ENCODE measurements at regions of chr11 and their contacts with region 1.

Region 1: DNA sequence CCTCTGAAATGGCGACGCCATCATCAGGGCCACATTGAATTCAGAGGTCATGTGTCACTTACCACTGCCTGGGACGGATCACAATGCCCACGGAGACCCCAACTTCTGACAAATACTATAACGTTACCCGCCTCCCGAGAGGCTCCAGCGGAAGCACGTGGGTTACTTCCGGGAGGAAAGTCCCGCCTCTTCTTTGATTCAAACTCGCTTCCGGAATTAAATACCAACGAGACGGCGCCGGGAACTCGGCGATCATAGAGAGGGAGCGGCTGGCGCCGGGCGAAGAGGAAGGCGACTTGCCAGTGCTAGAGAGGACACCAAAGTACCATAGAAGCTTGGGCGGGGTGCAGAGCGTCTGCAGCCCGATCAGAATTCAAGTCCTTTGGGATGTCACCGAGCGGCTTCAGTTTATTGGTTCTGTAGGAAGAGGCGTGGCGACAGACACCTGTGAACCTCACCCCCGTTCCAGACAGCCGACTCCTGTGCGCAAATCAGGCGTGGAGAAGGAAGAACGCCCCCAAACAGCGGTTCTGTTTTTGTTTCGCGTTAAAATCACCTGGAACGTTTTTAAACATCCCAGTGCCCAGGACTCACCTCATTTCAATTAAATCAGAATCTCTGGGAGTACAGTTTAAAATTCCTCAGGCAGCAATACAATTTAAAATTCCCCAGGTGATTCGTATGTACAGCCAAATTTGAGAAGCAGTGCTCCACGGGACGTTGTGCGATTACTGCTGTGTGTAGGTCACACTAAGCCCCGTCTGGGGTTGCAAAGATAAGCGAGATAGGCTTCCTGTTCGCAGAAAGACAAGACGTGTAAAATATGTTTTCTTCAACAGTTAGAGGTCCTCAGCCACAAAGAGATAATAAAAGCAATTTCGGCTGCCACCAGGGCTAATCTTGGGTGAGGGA is at the start of gene TIMM10:
- DNase-seq: peak; percentile 74 to 97
- ATAC-seq: peak; percentile 81 to 93 (median 87)
- H3K4me3 ChIP-seq: peak within 1 kb of the TSS; percentile 65
- H3K4me3 Mint-ChIP-seq: peak within 1 kb of the TSS; percentile 99
- H3K27ac ChIP-seq: peak within 1 kb of the TSS; percentile 78
- H3K27ac Mint-ChIP-seq: peak within 1 kb of the TSS; percentile 97 to 99
- H3K4me1 ChIP-seq: peaks cover 15% of the 10 kb centered on the region
- H3K4me1 Mint-ChIP-seq: peaks cover 30 to 36% of the 10 kb centered on the region in 2 donors
- H3K27me3 ChIP-seq: no peaks in the 10 kb centered on the region
- H3K27me3 Mint-ChIP-seq: no peaks in the 10 kb centered on the region
- CTCF ChIP-seq: no peak
- total RNA-seq, gene TIMM10: 15.0 to 18.8 (median 17.1) TPM

Region 2: GRCh38 chr11:57456960-57457642 is 73.8 kb before region 1 on chr11:
- intact Hi-C with region 1: loop called (anchors 1 kb)
- DNase-seq: peak; percentile 73 to 85
- ATAC-seq: peak; percentile 77 to 80 (median 78)
- H3K4me3 ChIP-seq: no peak overlapping the region
- H3K4me3 Mint-ChIP-seq: peak overlapping the region; percentile 73
- H3K27ac ChIP-seq: no peak overlapping the region
- H3K27ac Mint-ChIP-seq: no peak overlapping the region
- H3K4me1 ChIP-seq: peaks cover 41% of the 10 kb centered on the region
- H3K4me1 Mint-ChIP-seq: peaks cover 24 to 39% of the 10 kb centered on the region in 2 donors
- H3K27me3 ChIP-seq: peaks cover 33% of the 10 kb centered on the region
- H3K27me3 Mint-ChIP-seq: peaks cover 23 to 28% of the 10 kb centered on the region in 2 donors
- CTCF ChIP-seq: peak; percentile 95

Region 3: DNA sequence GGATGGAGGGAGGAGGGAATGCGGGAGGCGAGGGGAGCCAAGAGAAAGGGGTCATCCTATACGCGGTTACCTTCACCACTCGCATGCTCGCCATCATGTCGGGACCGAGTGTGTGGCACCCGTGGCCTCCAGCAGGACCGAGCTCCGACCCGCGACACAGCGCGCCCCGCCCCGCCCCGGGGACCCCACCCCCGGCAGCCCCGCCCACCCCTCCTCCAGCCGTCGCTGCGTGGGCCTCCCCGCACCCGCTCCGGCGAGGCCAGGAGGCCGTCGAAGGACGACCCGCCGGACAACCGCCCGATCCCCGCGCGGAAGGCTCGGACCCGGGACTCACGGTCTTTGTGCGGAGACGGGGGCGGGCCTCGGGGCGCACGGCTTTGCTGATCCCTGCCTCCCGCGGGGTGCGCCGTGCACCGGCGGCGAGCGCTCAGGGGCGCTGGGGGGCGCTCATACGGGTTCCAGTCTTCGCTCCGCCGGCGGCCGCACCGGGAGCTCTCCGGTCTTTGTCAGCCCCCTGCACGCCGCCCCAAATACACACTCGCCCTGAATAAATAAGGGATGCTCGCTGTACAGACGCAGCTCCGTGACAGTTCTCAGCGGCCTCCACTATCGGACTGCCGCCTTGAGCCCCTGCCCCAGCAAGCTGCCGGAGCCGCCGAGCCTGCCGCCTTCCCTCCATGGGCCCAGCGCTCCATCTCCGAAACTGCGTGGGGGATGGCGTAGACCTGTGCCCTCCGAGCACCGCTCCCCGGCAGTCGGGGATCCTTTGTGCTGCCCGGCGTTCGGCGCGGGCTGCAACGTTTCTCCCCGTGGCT is 36.9 kb after region 1 on chr11 and contains the start of gene UBE2L6:
- intact Hi-C with region 1: loop called (anchors 1 kb)
- DNase-seq: peak; percentile 56 to 95
- ATAC-seq: peak; percentile 76 to 91 (median 78)
- H3K4me3 ChIP-seq: peak within 1 kb of the TSS; percentile 99
- H3K4me3 Mint-ChIP-seq: peak within 1 kb of the TSS; percentile 99
- H3K27ac ChIP-seq: peak within 1 kb of the TSS; percentile 95
- H3K27ac Mint-ChIP-seq: peak within 1 kb of the TSS; percentile 96 to 99
- H3K4me1 ChIP-seq: peaks cover 24% of the 10 kb centered on the region
- H3K4me1 Mint-ChIP-seq: peaks cover 40 to 50% of the 10 kb centered on the region in 2 donors
- H3K27me3 ChIP-seq: no peaks in the 10 kb centered on the region
- H3K27me3 Mint-ChIP-seq: no peaks in the 10 kb centered on the region
- CTCF ChIP-seq: peak; percentile 93
- total RNA-seq, gene UBE2L6: 89.1 to 108 (median 103) TPM

Region 4: GRCh38 chr11:57667736-57668435 is 137.0 kb after region 1 on chr11 and contains the start of gene ZDHHC5:
- intact Hi-C with region 1: loop called (anchors 2 kb)
- DNase-seq: peak; percentile 99 to 100
- ATAC-seq: peak; percentile 79 to 95 (median 82)
- H3K4me3 ChIP-seq: peak within 1 kb of the TSS; percentile 97
- H3K4me3 Mint-ChIP-seq: peak within 1 kb of the TSS; percentile 97
- H3K27ac ChIP-seq: peak within 1 kb of the TSS; percentile 95
- H3K27ac Mint-ChIP-seq: peak within 1 kb of the TSS; percentile 97 to 98
- H3K4me1 ChIP-seq: peaks cover 19% of the 10 kb centered on the region
- H3K4me1 Mint-ChIP-seq: peaks cover 44 to 58% of the 10 kb centered on the region in 2 donors
- H3K27me3 ChIP-seq: no peaks in the 10 kb centered on the region
- H3K27me3 Mint-ChIP-seq: no peaks in the 10 kb centered on the region
- CTCF ChIP-seq: peak; percentile 53
- total RNA-seq, gene ZDHHC5: 46.1 to 64.0 (median 55.5) TPM

Region 5: GRCh38 chr11:57741132-57742086 is 210.6 kb after region 1 on chr11 and contains the start of gene SELENOH:
- intact Hi-C with region 1: loop called (anchors 2 kb)
- DNase-seq: peak; percentile 81 to 96
- ATAC-seq: peak; percentile 84 to 91 (median 86)
- H3K4me3 ChIP-seq: peak within 1 kb of the TSS; percentile 94
- H3K4me3 Mint-ChIP-seq: peak within 1 kb of the TSS; percentile 99
- H3K27ac ChIP-seq: peak within 1 kb of the TSS; percentile 97
- H3K27ac Mint-ChIP-seq: peak within 1 kb of the TSS; percentile 99
- H3K4me1 ChIP-seq: peaks cover 17% of the 10 kb centered on the region
- H3K4me1 Mint-ChIP-seq: peaks cover 18 to 30% of the 10 kb centered on the region in 2 donors
- H3K27me3 ChIP-seq: no peaks in the 10 kb centered on the region
- H3K27me3 Mint-ChIP-seq: no peaks in the 10 kb centered on the region
- CTCF ChIP-seq: no peak
- total RNA-seq, gene SELENOH: 55.3 to 83.3 (median 61.0) TPM

Measured in natural killer cell (primary cell).